ENCODE measurements at regions of chr10 and their contacts with region 1.

Region 1: DNA sequence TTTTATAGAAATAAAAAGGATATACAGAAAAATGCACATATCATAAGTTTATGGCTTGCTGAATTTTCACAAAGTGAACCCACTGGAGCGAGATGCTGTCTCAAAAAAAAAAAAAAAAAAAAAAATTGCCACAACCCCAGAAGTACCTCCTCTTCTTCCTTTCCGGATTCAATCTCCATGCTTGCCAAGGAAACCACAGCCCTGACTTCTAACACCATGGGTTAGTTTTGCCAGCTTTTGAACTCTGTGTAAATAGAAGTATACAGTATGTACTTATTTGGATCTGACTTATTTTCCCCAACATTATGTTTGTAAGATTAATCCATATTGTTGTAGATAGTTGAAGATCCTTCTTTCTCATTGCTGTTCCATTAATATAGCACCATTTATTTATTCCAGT is 40.0 kb downstream of the FANK1 start:
- DNase-seq: no peak
- H3K4me3 ChIP-seq: no peak overlapping the region
- CTCF ChIP-seq: no peak

Region 2: DNA sequence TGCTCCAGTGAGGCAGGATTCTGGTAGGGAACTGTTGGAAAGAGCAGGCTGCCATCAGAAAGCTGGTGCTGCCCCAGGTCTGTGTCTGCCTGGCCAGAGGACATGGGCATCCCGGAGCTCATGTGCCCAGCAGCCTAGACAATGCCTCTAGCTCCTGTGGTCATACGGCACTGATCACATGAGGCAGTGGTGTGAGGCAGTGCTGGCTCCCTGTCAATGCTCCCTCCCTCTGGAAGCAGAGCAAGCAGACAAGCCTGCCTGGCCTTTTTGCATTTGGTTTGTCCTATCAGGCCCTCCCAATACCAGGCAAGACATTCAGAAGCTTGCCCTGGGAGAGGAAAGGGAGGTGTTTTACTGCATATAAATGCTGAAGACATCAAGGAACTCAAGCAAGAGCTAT is 141.2 kb before region 1 on chr10:
- CTCF ChIA-PET with region 1: no interaction called
- POLR2A ChIA-PET with region 1: no interaction called
- DNase-seq: no peak
- H3K4me3 ChIP-seq: no peak overlapping the region
- CTCF ChIP-seq: no peak

Region 3: GRCh38 chr10:125878957-125879835 is 57.1 kb before region 1 on chr10:
- CTCF ChIA-PET with region 1: no interaction called
- POLR2A ChIA-PET with region 1: no interaction called
- DNase-seq: peak; percentile 65
- H3K4me3 ChIP-seq: no peak overlapping the region
- CTCF ChIP-seq: no peak

Region 4: GRCh38 chr10:125976960-125977603 is 40.8 kb after region 1 on chr10:
- CTCF ChIA-PET with region 1: interaction called, 15 read pairs
- POLR2A ChIA-PET with region 1: interaction called, 6 read pairs
- DNase-seq: no peak
- H3K4me3 ChIP-seq: no peak overlapping the region
- CTCF ChIP-seq: no peak

Region 5: DNA sequence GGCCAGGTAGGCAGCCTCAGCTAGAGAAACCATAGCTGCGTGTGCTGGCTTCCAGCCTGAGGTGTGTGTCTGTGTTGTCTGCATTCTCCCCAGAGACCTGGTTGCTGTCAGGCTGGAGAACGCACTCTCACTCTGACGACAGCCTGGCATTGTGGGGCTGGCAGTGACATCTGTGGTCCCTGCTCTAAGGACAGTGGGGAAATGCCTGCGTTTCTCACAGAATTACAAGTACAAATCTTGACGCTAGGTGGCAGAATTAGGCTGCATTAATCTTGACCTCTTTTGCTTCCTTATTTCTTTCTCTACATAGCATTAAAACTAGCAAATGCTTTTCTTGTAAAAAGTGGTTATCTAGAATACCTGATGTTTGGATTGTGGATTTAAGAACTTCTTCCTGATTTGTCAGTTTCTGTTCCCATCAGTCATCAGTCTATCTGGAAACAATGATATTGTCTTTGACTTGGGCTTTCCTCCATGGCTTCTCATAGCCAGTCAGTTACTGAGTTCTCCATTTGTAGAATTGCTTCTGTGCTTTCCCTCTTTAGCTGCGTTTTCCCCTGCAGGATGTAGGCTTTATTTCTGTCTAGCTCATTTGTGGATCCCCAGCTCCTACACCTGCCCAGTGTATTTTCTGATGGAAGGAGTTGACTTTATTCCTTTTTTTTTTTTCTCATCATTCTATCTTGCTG is 46.1 kb after region 1 on chr10:
- CTCF ChIA-PET with region 1: interaction called, 15 read pairs
- POLR2A ChIA-PET with region 1: no interaction called
- DNase-seq: peak; percentile 26
- H3K4me3 ChIP-seq: no peak overlapping the region
- CTCF ChIP-seq: peak; percentile 32

Region 6: DNA sequence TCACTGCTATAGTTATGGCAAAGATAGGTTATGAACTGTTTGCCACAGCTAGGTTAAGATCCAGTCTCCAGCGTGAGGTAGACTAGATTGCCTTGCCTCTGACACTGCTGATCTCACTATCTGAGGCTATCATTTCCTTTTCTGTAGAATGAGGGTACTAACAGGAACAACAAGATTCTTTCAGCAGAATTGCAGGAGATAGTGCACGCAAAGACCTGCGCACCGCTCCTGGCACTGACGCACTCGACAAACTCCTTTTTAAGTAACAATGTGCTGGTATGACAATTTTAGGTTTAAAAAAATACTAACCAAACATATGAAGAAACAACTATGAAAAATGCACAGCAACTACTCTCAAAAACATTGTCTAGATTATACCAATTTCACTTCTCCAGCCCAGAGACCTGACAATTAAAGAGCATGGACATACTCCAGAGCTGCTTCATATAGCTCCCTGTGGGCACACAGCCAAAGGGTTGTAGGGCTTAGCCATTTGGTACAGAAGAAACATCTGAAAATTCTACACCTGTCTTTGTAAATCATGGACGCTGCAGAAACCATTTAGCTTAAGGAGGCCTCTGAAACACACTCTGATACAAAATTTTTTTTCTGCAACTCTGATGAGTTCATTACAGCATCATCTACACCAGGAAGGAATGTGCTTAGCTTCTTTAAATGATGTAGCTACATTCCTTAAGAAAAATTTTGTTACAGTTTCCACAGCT is 444.2 kb after region 1 on chr10:
- CTCF ChIA-PET with region 1: interaction called, 11 read pairs
- POLR2A ChIA-PET with region 1: no interaction called
- DNase-seq: no peak
- H3K4me3 ChIP-seq: no peak overlapping the region
- CTCF ChIP-seq: no peak

Region 7: GRCh38 chr10:126504063-126504739 is 567.9 kb after region 1 on chr10:
- CTCF ChIA-PET with region 1: interaction called, 107 read pairs
- POLR2A ChIA-PET with region 1: no interaction called
- DNase-seq: no peak
- H3K4me3 ChIP-seq: no peak overlapping the region
- CTCF ChIP-seq: peak; percentile 73

Region 8: GRCh38 chr10:126749015-126749655 is 812.8 kb after region 1 on chr10:
- CTCF ChIA-PET with region 1: interaction called, 53 read pairs
- POLR2A ChIA-PET with region 1: no interaction called
- DNase-seq: peak; percentile 41
- H3K4me3 ChIP-seq: no peak overlapping the region
- CTCF ChIP-seq: peak; percentile 90

Measured in AG04449 (cell line).